IMR-90 (cell line): ENCODE measurements at regions of chr7 and their contacts with region 1.

Region 1: DNA sequence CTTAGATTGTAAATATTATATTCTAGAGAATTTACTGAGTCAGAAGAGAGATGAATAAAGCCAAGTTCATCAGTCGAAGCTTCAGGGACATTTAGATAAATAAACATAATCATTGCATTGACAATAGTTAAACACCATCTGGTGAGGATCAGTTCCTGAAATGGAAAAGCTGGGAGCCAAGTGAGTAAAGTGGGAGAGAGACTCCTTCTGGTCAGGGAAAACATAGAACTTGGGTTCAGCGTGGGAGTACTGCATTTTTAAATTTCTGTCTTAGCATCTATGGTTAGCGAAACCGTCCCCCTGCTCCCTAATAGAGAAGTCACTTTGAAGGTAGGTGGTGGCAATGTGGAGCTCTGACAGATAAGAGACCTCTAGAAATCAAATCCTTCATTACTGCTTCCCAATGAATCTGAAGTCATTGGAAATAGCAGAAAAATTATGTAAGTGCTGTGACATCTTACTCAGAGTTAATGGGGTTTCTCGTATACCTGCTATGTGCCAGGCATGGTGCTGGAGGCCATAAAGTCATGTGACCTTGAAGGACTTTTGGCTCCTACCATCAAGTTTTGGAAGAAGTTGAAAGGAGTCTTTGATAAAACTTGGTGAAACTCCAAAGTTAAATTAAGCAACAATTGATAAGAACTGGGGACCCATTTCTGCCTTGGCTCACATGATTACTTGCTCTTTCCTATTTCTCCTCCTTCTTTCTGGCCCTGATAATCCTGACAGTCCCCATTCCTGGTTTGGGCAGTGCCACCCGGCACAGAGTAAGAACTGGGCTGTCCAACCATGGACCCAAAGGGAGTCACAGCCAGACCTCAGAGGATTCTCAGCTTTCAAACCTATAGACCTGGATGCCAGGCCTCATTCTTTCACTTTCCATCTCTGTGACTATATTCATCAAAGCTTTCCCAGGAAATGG is 211.2 kb downstream of the C7orf25 start:
- DNase-seq: no peak
- ATAC-seq: no peak; the same call in 1 of the 2 replicates
- H3K4me3 ChIP-seq: no peak overlapping the region
- H3K27ac ChIP-seq: no peak overlapping the region
- H3K4me1 ChIP-seq: peaks cover 3% of the 10 kb centered on the region; the same call in 1 of the 2 replicates
- H3K27me3 ChIP-seq: peaks cover 2% of the 10 kb centered on the region; the same call in 1 of the 2 replicates
- CTCF ChIP-seq: 0 out of 2 replicates have a peak, but pooled peaks have one; percentile 7
- POLR2A ChIP-seq: no peak
- RAD21 ChIP-seq: no peak

Region 2: DNA sequence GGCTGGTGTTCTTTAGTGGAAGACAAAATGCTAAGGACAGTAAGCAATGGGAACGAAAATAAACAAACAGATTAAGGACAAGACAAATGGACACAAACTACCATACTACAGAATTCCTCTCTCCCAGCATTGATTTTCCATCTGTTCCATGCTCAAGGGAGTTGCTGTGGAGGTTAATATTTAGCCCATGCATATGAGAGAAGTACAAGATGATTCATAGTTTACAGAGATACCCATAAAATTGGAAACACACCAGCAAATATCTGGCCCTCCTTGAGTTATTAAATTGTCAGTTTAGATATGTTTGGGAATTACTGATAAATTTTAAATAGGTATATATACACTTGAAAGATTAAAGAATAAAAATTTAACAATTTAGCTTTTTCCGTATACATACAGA is 533.5 kb before region 1 on chr7:
- CTCF ChIA-PET with region 1: no interaction called
- POLR2A ChIA-PET with region 1: interaction called, 16 read pairs
- dilution Hi-C with region 1: no loop called
- in situ Hi-C with region 1: no loop called
- intact Hi-C with region 1: no loop called
- DNase-seq: peak; percentile 10
- ATAC-seq: no peak
- H3K4me3 ChIP-seq: no peak overlapping the region
- H3K27ac ChIP-seq: no peak overlapping the region
- H3K4me1 ChIP-seq: peaks cover 3% of the 10 kb centered on the region; the same call in 1 of the 2 replicates
- H3K27me3 ChIP-seq: no peaks in the 10 kb centered on the region
- CTCF ChIP-seq: no peak
- POLR2A ChIP-seq: no peak
- RAD21 ChIP-seq: no peak

Region 3: DNA sequence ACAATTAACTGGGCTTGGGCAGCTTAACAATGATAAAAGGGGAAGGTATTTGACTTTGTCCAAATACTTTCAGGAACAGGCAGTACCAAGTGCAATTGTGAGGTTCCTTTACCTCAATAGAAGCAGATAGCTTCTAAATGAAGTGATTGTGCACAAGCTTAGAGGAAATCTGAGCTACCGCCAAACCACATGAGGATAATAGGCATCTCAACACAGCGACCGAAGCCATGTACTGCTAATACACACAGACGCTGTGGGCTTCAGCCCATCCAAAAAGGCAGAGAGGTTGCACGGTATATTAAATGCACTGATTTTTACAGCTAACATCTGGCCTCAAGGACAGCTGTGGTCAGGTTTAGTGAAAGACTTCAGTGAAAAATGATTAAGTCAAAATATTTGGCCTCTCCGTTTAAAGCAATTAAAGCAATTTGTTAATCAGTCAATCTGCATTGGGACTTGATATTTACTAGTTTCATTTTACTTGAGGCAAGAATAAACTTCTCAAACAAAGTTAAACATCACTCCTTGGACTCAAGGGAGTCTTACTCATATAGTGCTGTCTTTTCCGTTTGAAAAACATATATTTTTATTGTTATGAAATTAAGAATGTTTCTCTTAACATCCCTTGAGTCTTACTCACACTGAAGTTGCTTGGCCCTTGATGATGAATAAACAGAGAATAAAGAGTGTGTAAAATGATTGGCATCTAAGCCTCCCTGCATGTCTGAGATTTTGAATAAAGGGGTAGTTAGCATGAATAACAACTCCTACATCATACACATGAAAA is 95.1 kb before region 1 on chr7:
- CTCF ChIA-PET with region 1: no interaction called
- POLR2A ChIA-PET with region 1: no interaction called
- dilution Hi-C with region 1: no loop called
- in situ Hi-C with region 1: no loop called
- intact Hi-C with region 1: no loop called
- DNase-seq: no peak
- ATAC-seq: no peak
- H3K4me3 ChIP-seq: no peak overlapping the region
- H3K27ac ChIP-seq: no peak overlapping the region
- H3K4me1 ChIP-seq: no peaks in the 10 kb centered on the region
- H3K27me3 ChIP-seq: no peaks in the 10 kb centered on the region; the same call in 1 of the 2 replicates
- CTCF ChIP-seq: no peak
- POLR2A ChIP-seq: no peak
- RAD21 ChIP-seq: no peak